ENCODE measurements at regions of chr10 and their contacts with region 1.

Region 1: GRCh38 chr10:89550509-89550908 is 15.1 kb upstream of the SLC16A12 start:
- DNase-seq: no peak
- ATAC-seq: no peak
- H3K4me3 ChIP-seq: no peak overlapping the region
- H3K4me3 Mint-ChIP-seq: no peak overlapping the region
- H3K27ac ChIP-seq: no peak overlapping the region
- H3K27ac Mint-ChIP-seq: no peak overlapping the region
- H3K4me1 ChIP-seq: no peaks in the 10 kb centered on the region
- H3K4me1 Mint-ChIP-seq: no peaks in the 10 kb centered on the region
- H3K27me3 ChIP-seq: no peaks in the 10 kb centered on the region
- H3K27me3 Mint-ChIP-seq: peaks cover 13% of the 10 kb centered on the region
- CTCF ChIP-seq: no peak

Region 2: GRCh38 chr10:88525371-88526079 is 1025.0 kb before region 1 on chr10:
- CTCF ChIA-PET with region 1: no interaction called
- POLR2A ChIA-PET with region 1: no interaction called
- intact Hi-C with region 1: no loop called
- DNase-seq: no peak
- ATAC-seq: no peak
- H3K4me3 ChIP-seq: no peak overlapping the region
- H3K4me3 Mint-ChIP-seq: no peak overlapping the region
- H3K27ac ChIP-seq: no peak overlapping the region
- H3K27ac Mint-ChIP-seq: no peak overlapping the region
- H3K4me1 ChIP-seq: no peaks in the 10 kb centered on the region
- H3K4me1 Mint-ChIP-seq: no peaks in the 10 kb centered on the region
- H3K27me3 ChIP-seq: no peaks in the 10 kb centered on the region
- H3K27me3 Mint-ChIP-seq: no peaks in the 10 kb centered on the region
- CTCF ChIP-seq: no peak

Region 3: DNA sequence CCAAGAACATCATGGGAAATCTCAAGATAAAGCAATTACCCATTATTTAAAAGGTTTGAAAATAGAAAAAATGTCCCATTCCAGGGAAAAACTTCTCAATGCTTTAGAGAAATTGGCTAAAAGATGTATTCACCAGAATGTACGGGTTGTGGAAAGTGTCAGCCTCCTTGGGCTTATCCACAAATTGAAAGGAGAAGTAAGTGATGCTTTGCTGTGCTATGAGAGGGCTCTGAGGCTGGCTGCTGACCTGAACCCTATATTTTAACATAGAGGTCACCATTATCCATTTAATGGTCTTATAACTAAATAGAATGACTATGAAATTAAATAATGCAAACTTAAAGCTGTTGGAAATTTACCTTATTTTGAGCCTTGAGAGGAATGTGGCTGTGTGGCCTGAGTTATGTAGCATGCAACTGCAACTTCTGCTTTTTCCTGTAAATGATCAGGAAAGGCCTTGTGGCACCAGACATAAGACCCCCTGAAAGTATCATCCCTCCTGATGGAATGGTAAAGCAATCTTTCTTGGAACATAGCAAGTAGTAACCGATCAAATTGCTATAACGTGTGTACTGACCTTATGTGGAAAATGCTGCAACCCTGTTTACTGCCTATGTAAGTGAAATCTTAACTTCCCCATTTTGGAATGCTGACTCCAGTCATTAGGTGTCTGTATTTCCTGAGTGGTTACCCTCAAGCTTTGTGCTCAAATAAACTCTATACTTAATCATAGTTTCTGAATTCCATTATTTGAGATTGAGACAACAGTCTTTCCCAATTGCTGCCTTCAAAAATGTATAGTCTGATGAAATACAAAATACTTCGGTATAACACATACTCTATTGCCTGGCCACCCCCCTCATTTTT is 165.8 kb before region 1 on chr10:
- CTCF ChIA-PET with region 1: no interaction called
- POLR2A ChIA-PET with region 1: no interaction called
- intact Hi-C with region 1: no loop called
- DNase-seq: peak; percentile 64
- ATAC-seq: peak; percentile 72
- H3K4me3 ChIP-seq: no peak overlapping the region
- H3K4me3 Mint-ChIP-seq: peak overlapping the region; percentile 24
- H3K27ac ChIP-seq: no peak overlapping the region
- H3K27ac Mint-ChIP-seq: peak overlapping the region; percentile 29
- H3K4me1 ChIP-seq: peaks cover 16% of the 10 kb centered on the region in 2 donors
- H3K4me1 Mint-ChIP-seq: peaks cover 18% of the 10 kb centered on the region
- H3K27me3 ChIP-seq: no peaks in the 10 kb centered on the region
- H3K27me3 Mint-ChIP-seq: no peaks in the 10 kb centered on the region
- CTCF ChIP-seq: no peak

Region 4: DNA sequence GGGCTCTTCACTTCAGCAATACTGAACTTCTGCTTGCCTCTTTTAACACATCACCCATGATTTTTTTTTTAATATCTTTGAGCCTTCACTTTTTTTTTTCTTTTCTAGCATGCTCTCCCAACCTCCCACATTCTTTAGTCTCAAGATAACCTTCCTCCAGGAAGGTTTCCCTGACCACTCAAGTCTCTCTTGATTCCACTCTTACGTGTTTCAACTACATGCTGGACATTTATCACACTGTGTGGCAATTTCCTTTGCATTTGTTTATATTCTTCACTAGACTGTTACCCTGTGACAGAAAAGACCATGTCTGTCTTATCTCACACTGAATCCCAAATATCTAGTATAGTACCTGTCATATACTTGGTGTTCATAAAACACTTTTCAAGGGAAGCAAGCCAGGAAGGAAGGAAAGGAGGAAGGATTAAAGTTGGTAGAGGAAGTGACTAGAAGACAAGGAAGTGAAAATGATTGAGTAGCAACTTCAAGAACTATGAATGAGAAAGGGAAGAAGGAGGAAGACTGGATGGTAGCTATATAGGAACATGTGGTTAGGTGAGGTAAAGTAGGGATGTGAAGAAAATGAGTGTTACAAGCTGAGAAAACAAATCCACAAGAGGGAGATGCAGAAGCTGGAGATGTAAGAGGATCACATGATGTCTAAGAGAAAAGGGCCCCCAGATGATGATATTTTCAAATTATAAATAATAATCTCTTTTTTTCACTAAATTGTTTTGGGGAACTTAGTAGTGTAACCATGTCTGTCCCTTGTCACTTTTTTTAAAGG is 95.8 kb before region 1 on chr10:
- CTCF ChIA-PET with region 1: no interaction called
- POLR2A ChIA-PET with region 1: no interaction called
- intact Hi-C with region 1: no loop called
- DNase-seq: no peak
- ATAC-seq: no peak
- H3K4me3 ChIP-seq: no peak overlapping the region
- H3K4me3 Mint-ChIP-seq: no peak overlapping the region
- H3K27ac ChIP-seq: no peak overlapping the region
- H3K27ac Mint-ChIP-seq: no peak overlapping the region
- H3K4me1 ChIP-seq: peaks cover 0 to 3% of the 10 kb centered on the region in 2 donors
- H3K4me1 Mint-ChIP-seq: peaks cover 4% of the 10 kb centered on the region
- H3K27me3 ChIP-seq: peaks cover 0 to 3% (median 0%) of the 10 kb centered on the region in 4 experiments
- H3K27me3 Mint-ChIP-seq: peaks cover 11% of the 10 kb centered on the region
- CTCF ChIP-seq: no peak

Region 5: DNA sequence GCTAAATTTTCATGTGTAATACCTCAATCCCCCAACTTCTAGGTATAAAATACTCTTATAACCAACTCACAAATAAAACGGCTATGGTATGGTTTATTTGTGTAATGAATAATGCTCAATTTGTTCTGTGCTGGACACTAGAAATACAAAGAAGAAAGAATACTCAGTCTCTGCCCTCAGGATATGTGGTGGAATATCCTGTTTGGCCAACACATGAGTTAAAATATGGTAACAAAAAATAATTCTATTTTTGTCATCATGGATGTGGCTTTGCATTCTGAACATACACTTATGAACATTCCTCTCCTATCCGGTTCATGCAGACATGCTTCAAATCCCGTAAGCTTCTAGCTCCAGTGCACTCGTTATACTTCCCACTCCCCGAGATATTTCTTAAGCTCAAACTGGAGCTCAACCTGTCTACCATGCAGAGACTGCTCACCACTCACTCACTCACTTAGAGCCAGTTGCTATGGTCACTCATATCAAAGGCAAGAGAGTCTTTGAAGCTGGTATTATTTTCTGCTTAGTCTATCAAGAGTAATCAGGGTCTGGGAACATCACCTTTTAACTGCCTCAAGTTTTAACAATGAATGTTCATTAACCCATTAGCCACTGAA is 38.7 kb after region 1 on chr10:
- CTCF ChIA-PET with region 1: no interaction called
- POLR2A ChIA-PET with region 1: no interaction called
- intact Hi-C with region 1: loop called (anchors 1 kb)
- DNase-seq: no peak
- ATAC-seq: no peak
- H3K4me3 ChIP-seq: no peak overlapping the region
- H3K4me3 Mint-ChIP-seq: no peak overlapping the region
- H3K27ac ChIP-seq: no peak overlapping the region
- H3K27ac Mint-ChIP-seq: no peak overlapping the region
- H3K4me1 ChIP-seq: no peaks in the 10 kb centered on the region
- H3K4me1 Mint-ChIP-seq: no peaks in the 10 kb centered on the region
- H3K27me3 ChIP-seq: no peaks in the 10 kb centered on the region
- H3K27me3 Mint-ChIP-seq: no peaks in the 10 kb centered on the region
- CTCF ChIP-seq: no peak

Region 6: DNA sequence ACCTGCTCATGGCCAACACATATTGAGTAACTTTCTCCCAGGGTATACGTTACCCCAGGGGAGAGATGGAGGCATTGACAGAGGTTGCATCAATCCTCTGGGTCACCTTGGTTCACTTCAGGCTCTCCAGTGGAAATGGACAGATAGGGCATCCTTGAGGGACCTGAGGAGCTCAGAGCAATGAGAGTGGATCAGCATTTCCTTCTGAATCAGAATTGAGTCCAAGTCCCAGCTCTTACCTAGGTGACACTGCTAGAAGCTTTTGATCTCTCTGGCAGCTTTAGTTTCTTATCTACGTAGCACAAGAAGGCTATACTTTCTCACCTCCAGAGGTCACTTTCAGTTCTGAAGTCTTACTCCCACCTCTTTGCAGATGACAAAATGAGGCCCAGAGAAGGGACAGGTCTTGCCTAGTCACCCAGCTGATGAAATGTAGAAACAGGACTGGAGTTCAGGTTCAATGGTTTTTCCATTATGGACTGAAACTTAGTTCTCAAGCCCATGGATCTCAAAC is 59.4 kb after region 1 on chr10:
- CTCF ChIA-PET with region 1: no interaction called
- POLR2A ChIA-PET with region 1: no interaction called
- intact Hi-C with region 1: no loop called
- DNase-seq: no peak
- ATAC-seq: no peak
- H3K4me3 ChIP-seq: no peak overlapping the region
- H3K4me3 Mint-ChIP-seq: no peak overlapping the region
- H3K27ac ChIP-seq: no peak overlapping the region
- H3K27ac Mint-ChIP-seq: no peak overlapping the region
- H3K4me1 ChIP-seq: no peaks in the 10 kb centered on the region
- H3K4me1 Mint-ChIP-seq: no peaks in the 10 kb centered on the region
- H3K27me3 ChIP-seq: no peaks in the 10 kb centered on the region
- H3K27me3 Mint-ChIP-seq: no peaks in the 10 kb centered on the region
- CTCF ChIP-seq: no peak

Measured in B cell (primary cell).